PC-9 (cell line): ENCODE measurements at regions of chr11 and their contacts with region 1.

Region 1: GRCh38 chr11:33987975-33988580 is 63.5 kb upstream of the CAPRIN1 start:
- DNase-seq: peak; percentile 67 to 76
- H3K4me3 ChIP-seq: no peak overlapping the region
- H3K27ac ChIP-seq: no peak overlapping the region
- H3K4me1 ChIP-seq: no peaks in the 10 kb centered on the region
- H3K27me3 ChIP-seq: no peaks in the 10 kb centered on the region
- CTCF ChIP-seq: peak; percentile 96

Region 2: DNA sequence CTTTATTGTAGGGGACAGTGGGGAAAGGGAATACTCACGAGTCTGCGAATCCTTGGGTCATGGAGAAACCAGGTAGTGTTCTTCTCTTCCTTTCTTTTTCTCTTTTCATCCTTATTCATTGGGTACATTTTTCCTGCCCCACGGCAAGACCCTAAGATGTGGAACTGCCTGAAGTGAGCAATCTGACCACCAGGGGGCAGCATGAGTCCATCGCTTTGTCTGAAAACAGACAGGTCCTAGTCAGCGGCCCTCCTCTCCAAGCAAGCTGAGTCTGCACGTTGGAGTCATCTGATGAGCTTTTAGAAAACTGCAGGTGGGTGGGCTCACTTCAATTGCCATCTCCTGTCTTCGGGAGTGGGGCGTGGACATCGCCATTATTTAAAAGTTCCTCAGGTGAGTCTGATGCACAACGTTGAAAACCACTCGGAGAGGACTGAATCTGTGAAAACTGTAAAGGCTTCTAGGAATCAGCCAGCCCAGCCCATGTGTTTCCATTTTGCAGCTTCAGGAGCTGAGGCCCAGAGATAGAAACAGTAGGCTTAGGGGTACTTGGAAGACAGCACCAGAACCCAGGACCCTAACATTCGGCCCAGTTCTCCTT is 179.8 kb before region 1 on chr11:
- CTCF ChIA-PET with region 1: interaction called, 11 read pairs
- POLR2A ChIA-PET with region 1: no interaction called
- intact Hi-C with region 1: no loop called
- DNase-seq: peak; percentile 65 to 84
- H3K4me3 ChIP-seq: no peak overlapping the region
- H3K27ac ChIP-seq: no peak overlapping the region
- H3K4me1 ChIP-seq: no peaks in the 10 kb centered on the region
- H3K27me3 ChIP-seq: no peaks in the 10 kb centered on the region
- CTCF ChIP-seq: peak; percentile 98

Region 3: GRCh38 chr11:33857933-33858371 is 130.1 kb before region 1 on chr11:
- CTCF ChIA-PET with region 1: interaction called, 6 read pairs
- POLR2A ChIA-PET with region 1: no interaction called
- intact Hi-C with region 1: loop called (anchors 1 kb)
- DNase-seq: peak; percentile 46 to 72
- H3K4me3 ChIP-seq: no peak overlapping the region
- H3K27ac ChIP-seq: no peak overlapping the region
- H3K4me1 ChIP-seq: no peaks in the 10 kb centered on the region
- H3K27me3 ChIP-seq: peaks cover 39% of the 10 kb centered on the region; the same call in 1 of the 2 replicates
- CTCF ChIP-seq: peak; percentile 98

Region 4: GRCh38 chr11:34006876-34007275 is 18.8 kb after region 1 on chr11:
- CTCF ChIA-PET with region 1: interaction called, 12 read pairs
- POLR2A ChIA-PET with region 1: no interaction called
- intact Hi-C with region 1: no loop called
- DNase-seq: no peak
- H3K4me3 ChIP-seq: no peak overlapping the region
- H3K27ac ChIP-seq: no peak overlapping the region
- H3K4me1 ChIP-seq: peaks cover 10% of the 10 kb centered on the region
- H3K27me3 ChIP-seq: no peaks in the 10 kb centered on the region
- CTCF ChIP-seq: no peak

Region 5: DNA sequence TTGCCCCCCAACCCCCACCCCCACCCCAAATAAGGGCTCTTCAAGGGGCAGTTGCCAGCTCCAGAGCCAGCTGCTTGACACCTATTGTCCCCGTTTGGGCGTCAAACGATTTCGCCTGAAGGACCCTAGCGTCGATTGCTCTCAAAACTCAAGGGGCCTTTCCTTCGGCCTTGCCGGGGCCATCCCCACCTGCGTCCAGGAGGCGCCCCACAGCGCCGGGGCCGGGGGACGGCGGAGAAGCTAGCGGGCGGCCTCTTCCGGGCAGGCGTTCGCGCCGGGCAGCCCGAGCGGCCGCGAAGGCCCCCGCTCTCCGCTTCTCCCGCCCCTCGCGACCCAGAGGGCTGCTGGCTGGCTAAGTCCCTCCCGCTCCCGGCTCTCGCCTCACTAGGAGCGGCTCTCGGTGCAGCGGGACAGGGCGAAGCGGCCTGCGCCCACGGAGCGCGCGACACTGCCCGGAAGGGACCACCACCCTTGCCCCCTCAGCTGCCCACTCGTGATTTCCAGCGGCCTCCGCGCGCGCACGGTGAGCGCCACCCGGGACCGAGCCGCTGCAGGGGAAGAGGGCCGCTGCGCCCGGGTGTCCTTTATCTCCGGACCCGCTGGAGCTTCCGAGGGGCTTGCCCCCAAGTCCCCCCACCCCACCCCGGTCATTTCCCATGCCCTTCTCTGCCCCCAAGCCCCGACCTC is 63.4 kb after region 1 on chr11 and contains the start of gene CAPRIN1:
- CTCF ChIA-PET with region 1: interaction called, 13 read pairs
- POLR2A ChIA-PET with region 1: no interaction called
- intact Hi-C with region 1: no loop called
- DNase-seq: peak; percentile 84 to 93
- H3K4me3 ChIP-seq: peak within 1 kb of the TSS; percentile 72
- H3K27ac ChIP-seq: peak within 1 kb of the TSS; percentile 94
- H3K4me1 ChIP-seq: peaks cover 39% of the 10 kb centered on the region
- H3K27me3 ChIP-seq: no peaks in the 10 kb centered on the region
- CTCF ChIP-seq: no peak
- total RNA-seq, gene CAPRIN1: 258 and 289 TPM in 2 replicates